ENCODE measurements at regions of chr2 and their contacts with region 1.

Region 1: DNA sequence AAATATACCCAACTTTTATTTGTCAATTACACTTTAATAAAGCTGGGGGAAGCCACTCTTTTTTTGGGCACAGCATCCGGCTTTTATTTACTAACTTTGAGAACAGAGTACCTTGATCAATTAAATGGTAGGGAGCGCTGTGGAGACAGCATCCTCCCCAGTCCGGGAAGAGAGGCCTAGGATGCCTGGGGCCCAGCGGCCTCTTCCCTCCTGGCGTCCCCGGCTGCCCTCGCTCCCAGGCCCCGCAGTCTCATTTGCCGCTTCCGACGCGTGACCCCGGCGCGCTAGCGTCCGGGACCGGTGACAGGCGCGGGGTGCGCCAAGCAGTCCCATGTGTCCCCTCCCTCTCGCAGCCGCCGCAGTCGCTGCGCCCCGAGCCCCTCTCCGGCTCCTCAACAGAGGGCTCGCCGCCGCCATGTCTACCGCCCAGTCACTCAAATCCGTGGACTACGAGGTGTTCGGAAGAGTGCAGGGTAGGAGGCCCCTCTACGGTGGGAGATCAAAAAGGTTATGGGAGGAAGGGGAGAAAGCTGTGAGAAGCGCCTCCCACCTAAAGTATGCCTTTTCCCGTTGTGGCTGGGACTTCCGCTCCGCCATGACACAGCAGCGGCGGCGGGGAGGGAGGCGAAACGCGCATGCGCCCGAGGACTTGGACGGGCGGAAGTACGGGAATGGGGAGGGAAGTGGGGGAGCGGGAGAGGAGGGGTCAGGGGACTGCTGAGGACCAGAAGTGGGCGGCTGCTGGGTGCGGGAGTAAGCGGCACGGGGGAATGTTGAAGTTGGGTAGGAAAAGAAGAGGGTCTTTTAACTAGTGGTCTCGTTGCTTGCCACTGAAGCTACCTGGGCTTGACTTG is at the start of gene ACYP2:
- DNase-seq: peak; percentile 76 to 93 (median 89)
- ATAC-seq: peak; percentile 88
- H3K4me3 ChIP-seq: peak within 1 kb of the TSS; percentile 89
- H3K4me3 Mint-ChIP-seq: peak within 1 kb of the TSS; percentile 92 to 98 (median 97)
- H3K27ac ChIP-seq: peak within 1 kb of the TSS; percentile 93
- H3K27ac Mint-ChIP-seq: peak within 1 kb of the TSS; percentile 98 to 100 (median 99)
- H3K4me1 ChIP-seq: peaks cover 0 to 6% of the 10 kb centered on the region in 2 donors
- H3K4me1 Mint-ChIP-seq: peaks cover 10 to 31% (median 24%) of the 10 kb centered on the region in 7 donors
- H3K27me3 ChIP-seq: no peaks in the 10 kb centered on the region
- H3K27me3 Mint-ChIP-seq: peaks cover 0 to 5% (median 0%) of the 10 kb centered on the region in 5 donors
- total RNA-seq, gene ACYP2: 12.3 to 19.6 (median 15.6) TPM

Region 2: GRCh38 chr2:53786705-53787612 is 328.6 kb before region 1 on chr2 and contains the starts of genes ASB3 and ERLEC1:
- CTCF ChIA-PET with region 1: no interaction called
- POLR2A ChIA-PET with region 1: no interaction called
- intact Hi-C with region 1: loop called (anchors 2 to 5 kb)
- DNase-seq: peak; percentile 69 to 87 (median 83)
- ATAC-seq: peak; percentile 95
- H3K4me3 ChIP-seq: peak within 1 kb of the TSS; percentile 66
- H3K4me3 Mint-ChIP-seq: peak within 1 kb of the TSS; percentile 88 to 99 (median 98)
- H3K27ac ChIP-seq: peak within 1 kb of the TSS; percentile 82
- H3K27ac Mint-ChIP-seq: peak within 1 kb of the TSS; percentile 81 to 99 (median 96)
- H3K4me1 ChIP-seq: peaks cover 14 to 16% of the 10 kb centered on the region in 2 donors
- H3K4me1 Mint-ChIP-seq: peaks cover 37 to 79% (median 67%) of the 10 kb centered on the region in 7 donors
- H3K27me3 ChIP-seq: no peaks in the 10 kb centered on the region
- H3K27me3 Mint-ChIP-seq: no peaks in the 10 kb centered on the region
- total RNA-seq, gene ASB3: 24.9 to 43.2 (median 34.5) TPM
- total RNA-seq, gene ERLEC1: 13.3 to 30.1 (median 26.3) TPM

Region 3: DNA sequence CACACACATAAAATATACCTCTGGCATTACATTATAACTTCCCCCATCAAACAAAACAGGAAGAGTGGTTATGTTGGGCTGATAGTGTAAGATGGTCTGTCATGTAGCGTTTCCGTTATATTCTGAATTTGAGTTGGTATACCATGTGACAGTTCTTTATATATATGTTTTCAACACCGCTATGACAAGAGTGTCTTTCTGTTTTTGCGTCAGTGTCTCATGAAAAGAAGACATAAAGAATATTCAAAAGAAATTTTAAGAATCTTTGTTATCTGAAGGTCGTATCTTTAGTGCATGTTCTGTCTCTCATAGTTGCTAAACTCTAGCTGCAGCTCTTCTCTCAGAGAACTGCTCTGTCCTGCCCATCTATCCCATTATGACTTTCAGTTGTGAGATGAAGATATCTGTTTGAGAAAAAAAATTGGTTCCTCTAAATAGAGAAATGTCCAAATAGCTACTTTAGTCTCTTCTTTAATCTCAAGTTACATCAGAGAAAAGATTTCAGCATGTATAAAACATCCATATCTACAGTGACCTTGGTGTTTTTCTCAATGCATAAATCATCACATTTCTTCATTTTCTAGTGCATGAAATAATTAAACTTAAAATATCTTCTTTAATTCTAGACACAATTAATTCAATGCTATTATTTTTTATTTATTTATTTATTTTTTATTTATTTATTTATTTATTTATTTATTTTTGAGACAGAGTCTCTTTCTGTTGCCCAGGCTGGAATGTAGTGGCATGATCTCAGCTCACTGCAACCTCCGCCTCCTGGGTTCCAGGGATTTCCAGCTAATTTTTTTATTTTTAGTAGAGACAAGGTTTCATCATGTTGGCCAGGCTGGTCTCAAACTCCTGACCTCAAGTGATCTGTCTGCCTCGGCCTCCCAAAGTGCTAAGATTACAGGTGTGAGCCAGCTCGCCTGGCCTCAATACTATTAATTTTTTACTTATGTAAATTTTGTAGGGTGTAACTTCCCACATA is 120.4 kb before region 1 on chr2:
- CTCF ChIA-PET with region 1: no interaction called
- POLR2A ChIA-PET with region 1: no interaction called
- intact Hi-C with region 1: loop called in 1 of 2 experiments (anchors 1 kb)
- DNase-seq: peak in 7 of 9 donors; percentile 71 to 89 (median 86)
- ATAC-seq: peak; percentile 97
- H3K4me3 ChIP-seq: peak overlapping the region; percentile 24
- H3K4me3 Mint-ChIP-seq: peak overlapping the region; percentile 64 to 79 (median 73)
- H3K27ac ChIP-seq: peak overlapping the region; percentile 73
- H3K27ac Mint-ChIP-seq: peak overlapping the region; percentile 83 to 98 (median 91)
- H3K4me1 ChIP-seq: peaks cover 32 to 34% of the 10 kb centered on the region in 2 donors
- H3K4me1 Mint-ChIP-seq: peaks cover 20 to 35% (median 29%) of the 10 kb centered on the region in 7 donors
- H3K27me3 ChIP-seq: no peaks in the 10 kb centered on the region
- H3K27me3 Mint-ChIP-seq: no peaks in the 10 kb centered on the region

Region 4: GRCh38 chr2:55133467-55134315 is 1018.2 kb after region 1 on chr2:
- CTCF ChIA-PET with region 1: no interaction called
- POLR2A ChIA-PET with region 1: no interaction called
- intact Hi-C with region 1: loop called in 1 of 2 experiments (anchors 5 kb)
- DNase-seq: peak; percentile 17 to 78 (median 52)
- ATAC-seq: peak; percentile 91
- H3K4me3 ChIP-seq: peak overlapping the region; percentile 55
- H3K4me3 Mint-ChIP-seq: peak overlapping the region; percentile 83 to 94 (median 88)
- H3K27ac ChIP-seq: peak overlapping the region; percentile 76
- H3K27ac Mint-ChIP-seq: peak overlapping the region; percentile 91 to 98 (median 97)
- H3K4me1 ChIP-seq: peaks cover 14 to 22% of the 10 kb centered on the region in 2 donors
- H3K4me1 Mint-ChIP-seq: peaks cover 19 to 49% (median 39%) of the 10 kb centered on the region in 7 donors
- H3K27me3 ChIP-seq: no peaks in the 10 kb centered on the region
- H3K27me3 Mint-ChIP-seq: no peaks in the 10 kb centered on the region

Region 5: DNA sequence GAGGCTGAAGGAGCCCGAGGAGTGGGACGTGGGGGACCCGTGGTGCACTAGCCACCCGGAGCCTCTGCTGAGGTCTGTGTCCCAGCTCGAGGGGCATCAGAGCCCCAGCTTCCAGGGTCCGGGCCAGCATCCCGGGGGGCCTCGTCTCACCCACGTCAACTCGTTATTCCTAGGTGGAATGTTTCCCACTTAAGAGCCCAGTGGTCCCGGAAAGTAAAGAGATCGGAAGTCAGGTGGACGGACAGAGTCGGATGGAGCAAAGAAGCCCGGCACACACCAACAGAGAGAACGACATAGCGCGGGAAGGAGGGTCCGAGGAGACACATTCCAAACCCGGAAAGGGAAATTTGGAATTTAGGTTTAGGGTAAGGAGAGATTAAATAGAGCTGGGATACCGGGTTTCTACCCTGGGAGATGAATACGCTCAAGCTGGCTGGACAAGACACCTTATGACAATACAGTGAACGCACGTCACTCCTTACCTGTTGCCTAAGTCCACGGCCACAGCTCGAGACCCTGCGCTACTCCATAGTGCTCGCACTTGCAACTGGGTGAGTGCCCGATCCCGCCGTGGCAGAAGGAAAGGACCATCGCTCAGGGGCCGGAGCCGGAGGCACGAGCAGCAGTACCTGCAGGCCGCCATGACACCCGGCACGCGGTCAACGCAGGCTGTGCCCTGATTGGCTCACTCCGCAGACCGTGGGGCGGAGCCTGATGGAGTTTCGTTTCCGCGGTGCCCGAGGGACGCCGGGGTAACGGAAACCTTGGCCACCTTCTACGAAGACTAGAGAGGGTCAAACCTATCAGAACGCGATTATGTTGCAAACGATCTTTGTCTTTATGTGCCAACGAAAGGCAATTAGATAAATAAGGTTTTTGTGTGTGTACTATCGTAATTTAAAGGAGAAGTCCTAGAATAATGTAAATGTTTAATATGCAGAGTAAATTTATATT is 1577.9 kb after region 1 on chr2 and contains the start of gene PNPT1:
- CTCF ChIA-PET with region 1: no interaction called
- POLR2A ChIA-PET with region 1: no interaction called
- intact Hi-C with region 1: loop called in 1 of 2 experiments (anchors 5 kb)
- DNase-seq: peak; percentile 78 to 92 (median 90)
- ATAC-seq: peak; percentile 100
- H3K4me3 ChIP-seq: peak within 1 kb of the TSS; percentile 90
- H3K4me3 Mint-ChIP-seq: peak within 1 kb of the TSS; percentile 94 to 99 (median 97)
- H3K27ac ChIP-seq: peak within 1 kb of the TSS; percentile 72
- H3K27ac Mint-ChIP-seq: peak within 1 kb of the TSS; percentile 92 to 99 (median 96)
- H3K4me1 ChIP-seq: peaks cover 0 to 6% of the 10 kb centered on the region in 2 donors
- H3K4me1 Mint-ChIP-seq: peaks cover 18 to 50% (median 43%) of the 10 kb centered on the region in 7 donors
- H3K27me3 ChIP-seq: no peaks in the 10 kb centered on the region
- H3K27me3 Mint-ChIP-seq: peaks cover 0 to 6% (median 3%) of the 10 kb centered on the region in 5 donors
- total RNA-seq, gene PNPT1: 16.9 to 31.2 (median 18.5) TPM

Measured in naive thymus-derived CD4-positive, alpha-beta T cell (primary cell).